Activated naive CD4-positive, alpha-beta T cell treated with anti-CD3 and anti-CD28 coated beads, Interleukin-2, amount 10 ng/mL, durations not matched to agents 7 days and 5 days (primary cell): ENCODE measurements at regions of chr2 and their contacts with region 1.

Region 1: GRCh38 chr2:20326163-20326780 is 24.4 kb downstream of the PUM2 start:
- DNase-seq: peak; percentile 69
- H3K4me3 Mint-ChIP-seq: no peak overlapping the region
- H3K27ac Mint-ChIP-seq: peak overlapping the region; percentile 19
- H3K4me1 Mint-ChIP-seq: peaks cover 63% of the 10 kb centered on the region
- H3K27me3 Mint-ChIP-seq: no peaks in the 10 kb centered on the region

Region 2: DNA sequence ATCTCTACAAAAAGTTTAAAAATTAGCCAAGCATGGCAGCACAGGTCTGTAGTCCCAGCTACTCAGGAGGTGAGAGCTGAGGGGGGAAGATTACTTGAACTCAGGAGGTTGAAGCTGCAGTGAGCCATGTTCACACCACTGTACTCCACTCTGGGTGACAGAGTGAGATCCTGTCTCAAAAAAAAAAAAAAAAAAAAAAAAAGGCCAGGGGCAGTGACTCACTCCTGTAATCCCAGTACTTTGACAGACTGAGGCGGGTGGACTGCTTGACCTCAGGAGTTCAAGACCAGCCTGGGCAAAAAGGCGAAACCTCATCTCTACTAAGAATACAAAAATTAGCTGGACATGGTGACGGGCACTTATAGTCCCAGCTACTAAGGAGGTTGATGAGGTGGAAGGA is 12.6 kb before region 1 on chr2:
- CTCF ChIA-PET with region 1: interaction called, 13 read pairs
- DNase-seq: no peak
- H3K4me3 Mint-ChIP-seq: no peak overlapping the region
- H3K27ac Mint-ChIP-seq: no peak overlapping the region
- H3K4me1 Mint-ChIP-seq: peaks cover 19% of the 10 kb centered on the region
- H3K27me3 Mint-ChIP-seq: no peaks in the 10 kb centered on the region

Region 3: GRCh38 chr2:20343128-20343527 is 16.9 kb after region 1 on chr2:
- CTCF ChIA-PET with region 1: interaction called, 24 read pairs
- DNase-seq: no peak
- H3K4me3 Mint-ChIP-seq: no peak overlapping the region
- H3K27ac Mint-ChIP-seq: no peak overlapping the region
- H3K4me1 Mint-ChIP-seq: peaks cover 75% of the 10 kb centered on the region
- H3K27me3 Mint-ChIP-seq: no peaks in the 10 kb centered on the region

Region 4: DNA sequence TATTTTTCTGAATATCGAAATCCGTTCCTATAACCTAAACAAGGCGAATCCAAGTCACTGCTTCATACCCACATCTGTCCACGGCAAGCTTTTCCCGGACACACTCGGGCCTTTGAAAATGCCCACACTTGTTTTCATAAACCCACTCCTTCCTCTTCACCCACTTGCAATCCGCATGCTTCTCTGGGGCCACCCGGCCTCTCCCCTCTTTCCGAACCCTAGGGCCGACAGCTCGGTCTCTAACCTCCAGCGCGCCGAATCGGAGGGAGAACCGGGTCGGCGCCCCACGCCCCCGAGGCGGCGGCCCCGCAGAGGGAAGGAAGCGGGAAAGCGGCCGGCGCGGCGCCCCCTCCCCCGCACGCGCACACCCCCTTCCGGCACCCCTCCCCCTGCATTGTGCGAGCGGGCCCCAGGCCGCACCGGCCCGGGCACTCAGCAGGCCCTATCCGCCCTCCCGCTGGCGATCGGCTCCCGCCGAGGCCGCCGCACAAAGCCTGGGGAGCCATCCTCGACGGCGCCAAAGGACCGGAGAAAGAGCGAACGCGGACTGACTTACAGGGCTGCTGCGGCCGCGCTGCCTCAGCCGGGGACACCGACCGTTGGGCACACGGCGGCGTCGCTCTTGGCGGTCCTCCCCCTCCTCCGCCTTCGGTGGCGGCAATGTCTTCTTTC is 23.9 kb after region 1 on chr2:
- CTCF ChIA-PET with region 1: interaction called, 24 read pairs
- DNase-seq: peak; percentile 68
- H3K4me3 Mint-ChIP-seq: no peak overlapping the region
- H3K27ac Mint-ChIP-seq: no peak overlapping the region
- H3K4me1 Mint-ChIP-seq: peaks cover 41% of the 10 kb centered on the region
- H3K27me3 Mint-ChIP-seq: no peaks in the 10 kb centered on the region

Region 5: DNA sequence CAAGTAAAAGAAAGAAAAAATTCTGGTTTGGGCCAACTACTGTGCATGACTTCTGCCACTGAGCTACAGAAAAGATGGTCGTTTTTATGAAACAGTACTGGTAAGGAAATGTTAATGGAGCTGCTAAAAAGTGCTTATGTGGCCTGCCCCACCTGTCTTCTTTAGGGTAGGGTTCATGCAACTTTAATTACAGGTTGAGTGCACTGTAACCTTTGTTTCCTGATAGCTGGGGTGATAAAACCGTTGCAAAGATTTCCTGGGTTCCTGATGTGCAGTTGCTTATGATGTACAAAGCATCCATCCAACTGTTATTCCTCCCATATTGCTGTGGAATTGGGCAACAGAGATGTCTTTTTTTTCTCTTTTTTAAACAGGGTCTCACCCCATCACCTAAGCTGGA is 58.7 kb after region 1 on chr2:
- CTCF ChIA-PET with region 1: interaction called, 10 read pairs
- DNase-seq: no peak
- H3K4me3 Mint-ChIP-seq: no peak overlapping the region
- H3K27ac Mint-ChIP-seq: no peak overlapping the region
- H3K4me1 Mint-ChIP-seq: peaks cover 3% of the 10 kb centered on the region
- H3K27me3 Mint-ChIP-seq: peaks cover 12% of the 10 kb centered on the region